GM12878 (cell line): ENCODE measurements at regions of chr3 and their contacts with region 1.

Region 1: GRCh38 chr3:184250167-184250828 is 826 bp downstream of the EEF1AKMT4 start:
- DNase-seq: peak; percentile 85
- ATAC-seq: peak; percentile 88
- H3K4me3 ChIP-seq: peak overlapping the region; percentile 82
- H3K27ac ChIP-seq: peak overlapping the region; percentile 91
- H3K4me1 ChIP-seq: no peaks in the 10 kb centered on the region
- H3K27me3 ChIP-seq: no peaks in the 10 kb centered on the region
- CTCF ChIP-seq: peak; percentile 96 to 97 (median 96)
- EP300 ChIP-seq: no peak
- POLR2A ChIP-seq: no peak
- RAD21 ChIP-seq: peak; percentile 79

Region 2: DNA sequence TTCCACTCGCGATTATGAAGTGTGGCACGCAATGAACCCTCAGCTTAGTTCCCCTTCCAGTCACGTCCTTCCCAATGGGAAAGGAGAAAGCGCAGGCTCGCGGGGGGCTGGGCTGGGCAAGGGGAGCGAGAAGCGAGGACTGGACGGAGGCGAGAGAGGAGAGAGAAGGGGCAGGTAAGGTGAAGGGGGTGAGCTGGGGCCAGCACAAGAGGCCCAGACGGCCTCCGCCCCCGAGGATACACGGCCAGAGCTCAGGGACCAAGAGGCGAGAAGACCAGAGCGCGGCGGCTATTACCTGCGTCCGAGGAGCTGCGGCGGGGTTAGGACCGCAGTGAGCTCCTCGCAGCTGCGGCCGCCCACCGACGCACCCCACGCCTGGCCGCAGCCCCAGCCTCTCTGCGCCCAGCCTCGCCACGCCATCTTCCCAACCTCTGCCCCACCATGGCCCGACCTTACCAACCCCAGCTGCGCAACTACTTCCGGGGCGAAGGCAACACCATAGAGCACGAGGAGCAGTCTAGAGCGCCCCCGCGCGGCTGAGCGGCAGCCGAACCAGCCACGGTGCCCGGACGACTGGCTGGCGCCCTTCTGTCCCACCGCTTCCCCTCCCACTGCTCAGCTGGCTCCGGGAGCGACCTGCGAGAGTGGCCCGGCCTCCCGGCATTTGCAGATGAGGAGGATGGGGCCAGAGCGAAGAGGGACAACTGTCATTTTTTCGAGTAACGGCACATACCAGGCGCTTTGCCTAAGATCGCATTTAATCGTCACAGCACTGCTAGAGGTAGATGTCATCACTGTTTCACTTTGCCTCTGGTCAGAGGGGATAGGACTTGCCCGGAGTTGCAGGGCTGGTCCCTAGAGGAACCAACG is 365.6 kb before region 1 on chr3 and contains the start of gene PARL:
- CTCF ChIA-PET with region 1: interaction called, 8 read pairs
- POLR2A ChIA-PET with region 1: no interaction called
- RAD21 ChIA-PET with region 1: interaction called, 3 read pairs
- SMC1A ChIA-PET with region 1: no interaction called
- in situ Hi-C with region 1: loop called (anchors 5 kb)
- intact Hi-C with region 1: loop called (anchors 1 kb)
- DNase-seq: peak; percentile 70
- ATAC-seq: peak; percentile 99
- H3K4me3 ChIP-seq: peak within 1 kb of the TSS; percentile 94
- H3K27ac ChIP-seq: peak within 1 kb of the TSS; percentile 76
- H3K4me1 ChIP-seq: peaks cover 4% of the 10 kb centered on the region
- H3K27me3 ChIP-seq: no peaks in the 10 kb centered on the region
- CTCF ChIP-seq: peak; percentile 98; a peak in 5 of 6 replicates
- EP300 ChIP-seq: no peak
- POLR2A ChIP-seq: peak; percentile 98
- RAD21 ChIP-seq: peak; percentile 67
- polyA plus RNA-seq, gene PARL: 49.7 to 83.0 TPM

Region 3: DNA sequence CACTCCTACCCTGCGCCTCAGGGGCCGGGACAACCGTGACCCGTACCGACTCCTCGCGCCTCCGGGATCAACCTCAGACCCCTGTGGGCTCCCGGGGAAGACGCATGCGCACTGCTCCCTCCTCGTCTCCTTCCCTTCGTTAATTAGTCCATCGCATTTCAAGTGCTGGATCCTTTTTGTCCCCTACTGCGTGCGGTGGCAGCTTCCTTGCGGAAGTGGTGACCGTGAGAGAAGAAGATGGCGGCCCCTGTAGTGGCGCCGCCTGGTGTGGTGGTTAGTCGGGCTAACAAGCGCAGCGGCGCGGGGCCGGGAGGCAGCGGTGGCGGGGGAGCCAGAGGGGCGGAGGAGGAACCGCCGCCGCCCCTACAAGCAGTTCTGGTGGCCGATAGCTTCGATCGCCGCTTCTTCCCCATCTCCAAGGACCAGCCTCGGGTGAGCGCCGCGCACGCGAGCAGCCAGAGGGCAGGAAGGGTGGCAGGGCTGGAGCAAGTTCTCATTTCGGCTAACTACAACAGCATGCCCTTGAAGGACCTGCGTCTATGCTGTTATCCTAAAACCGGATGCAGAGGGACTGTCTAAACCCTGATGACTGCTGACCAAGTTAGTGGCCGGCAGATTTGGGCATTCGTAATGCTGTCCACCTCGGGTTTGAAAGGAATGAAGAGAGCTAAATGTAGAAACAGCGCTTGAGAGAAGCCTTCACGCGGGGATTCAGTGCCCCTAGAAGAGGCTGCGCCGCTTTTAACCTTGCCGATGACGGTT is 115.0 kb before region 1 on chr3 and contains the start of gene EIF2B5:
- CTCF ChIA-PET with region 1: interaction called, 4 read pairs
- POLR2A ChIA-PET with region 1: no interaction called
- RAD21 ChIA-PET with region 1: no interaction called
- SMC1A ChIA-PET with region 1: interaction called, 3 read pairs
- in situ Hi-C with region 1: no loop called
- intact Hi-C with region 1: loop called (anchors 5 kb)
- DNase-seq: peak; percentile 84
- ATAC-seq: peak; percentile 92
- H3K4me3 ChIP-seq: peak within 1 kb of the TSS; percentile 95
- H3K27ac ChIP-seq: peak within 1 kb of the TSS; percentile 84
- H3K4me1 ChIP-seq: peaks cover 4% of the 10 kb centered on the region; the same call in 1 of the 2 replicates
- H3K27me3 ChIP-seq: no peaks in the 10 kb centered on the region
- CTCF ChIP-seq: peak; percentile 25 to 36 (median 35); a peak in 4 of 6 replicates
- EP300 ChIP-seq: no peak
- POLR2A ChIP-seq: peak; percentile 96
- RAD21 ChIP-seq: no peak
- polyA plus RNA-seq, gene EIF2B5: 13.7 to 23.6 TPM

Region 4: DNA sequence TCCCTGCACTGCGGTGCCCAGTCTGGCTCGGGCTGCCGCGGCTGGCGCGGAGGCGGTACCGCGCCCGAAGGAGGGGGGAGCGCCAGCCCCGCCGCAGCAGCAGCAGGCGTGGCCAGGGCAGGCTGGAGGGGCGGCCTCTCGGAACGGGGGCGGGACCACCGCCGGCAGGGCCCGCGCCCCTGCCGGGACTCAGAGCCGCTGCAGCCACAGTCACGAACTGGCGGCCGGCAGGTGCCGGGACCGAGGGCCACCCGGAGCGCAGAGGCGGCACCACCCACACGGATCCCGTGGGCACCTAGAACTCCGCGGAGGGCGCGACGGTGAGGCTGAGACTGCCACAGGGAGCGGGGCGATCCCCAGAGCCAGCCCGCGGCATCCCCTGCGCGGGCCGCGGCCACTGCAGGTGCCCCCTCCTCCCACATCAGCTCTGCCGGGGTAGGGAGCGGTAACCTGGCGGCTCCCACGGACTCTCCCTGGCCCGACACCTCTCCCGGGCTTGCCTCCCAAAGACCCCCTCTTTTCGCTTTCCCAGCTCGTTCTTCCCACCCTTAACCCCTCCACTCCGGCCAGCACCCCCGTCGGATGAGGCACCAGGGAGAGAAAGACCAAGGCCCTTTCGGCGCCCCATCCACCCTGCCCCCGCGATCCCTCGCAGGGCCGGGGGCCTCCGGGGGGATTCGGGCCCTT is 20.8 kb before region 1 on chr3 and contains the start of gene VWA5B2:
- CTCF ChIA-PET with region 1: interaction called, 69 read pairs
- POLR2A ChIA-PET with region 1: no interaction called
- RAD21 ChIA-PET with region 1: interaction called, 17 read pairs
- SMC1A ChIA-PET with region 1: interaction called, 15 read pairs
- in situ Hi-C with region 1: no loop called
- intact Hi-C with region 1: no loop called
- DNase-seq: no peak
- ATAC-seq: peak; percentile 96
- H3K4me3 ChIP-seq: peak within 1 kb of the TSS; percentile 29; the same call in 1 of the 2 replicates
- H3K27ac ChIP-seq: no peak within 1 kb of the TSS
- H3K4me1 ChIP-seq: no peaks in the 10 kb centered on the region
- H3K27me3 ChIP-seq: peaks cover 16 to 18% of the 10 kb centered on the region in 2 experiments
- CTCF ChIP-seq: peak in 1 of 3 experiments; percentile 18; a peak in 1 of 6 replicates
- EP300 ChIP-seq: no peak
- POLR2A ChIP-seq: no peak; the same call in 1 of the 2 replicates
- RAD21 ChIP-seq: no peak
- polyA plus RNA-seq, gene VWA5B2: not detected

Region 5: GRCh38 chr3:184298759-184299496 is 48.6 kb after region 1 on chr3 and contains the start of gene PSMD2:
- CTCF ChIA-PET with region 1: interaction called, 3 read pairs
- POLR2A ChIA-PET with region 1: no interaction called
- RAD21 ChIA-PET with region 1: no interaction called
- SMC1A ChIA-PET with region 1: no interaction called
- in situ Hi-C with region 1: no loop called
- intact Hi-C with region 1: loop called (anchors 5 kb)
- DNase-seq: peak; percentile 73
- ATAC-seq: peak; percentile 98
- H3K4me3 ChIP-seq: peak within 1 kb of the TSS; percentile 88
- H3K27ac ChIP-seq: peak within 1 kb of the TSS; percentile 66
- H3K4me1 ChIP-seq: peaks cover 3% of the 10 kb centered on the region
- H3K27me3 ChIP-seq: no peaks in the 10 kb centered on the region
- CTCF ChIP-seq: no peak
- EP300 ChIP-seq: no peak
- POLR2A ChIP-seq: peak; percentile 88
- RAD21 ChIP-seq: no peak
- polyA plus RNA-seq, gene PSMD2: 103 to 111 TPM